ENCODE measurements at regions of chr4 and their contacts with region 1.

Region 1: GRCh38 chr4:169612871-169613859 is 782 bp upstream of the NEK1 start:
- DNase-seq: peak; percentile 85
- H3K4me3 ChIP-seq: peak overlapping the region; percentile 54 to 96 (median 94)
- H3K27ac ChIP-seq: peak overlapping the region; percentile 32
- H3K4me1 ChIP-seq: peaks cover 18% of the 10 kb centered on the region
- H3K27me3 ChIP-seq: no peaks in the 10 kb centered on the region
- CTCF ChIP-seq: peak; percentile 72 to 73
- POLR2A ChIP-seq: no peak

Region 2: DNA sequence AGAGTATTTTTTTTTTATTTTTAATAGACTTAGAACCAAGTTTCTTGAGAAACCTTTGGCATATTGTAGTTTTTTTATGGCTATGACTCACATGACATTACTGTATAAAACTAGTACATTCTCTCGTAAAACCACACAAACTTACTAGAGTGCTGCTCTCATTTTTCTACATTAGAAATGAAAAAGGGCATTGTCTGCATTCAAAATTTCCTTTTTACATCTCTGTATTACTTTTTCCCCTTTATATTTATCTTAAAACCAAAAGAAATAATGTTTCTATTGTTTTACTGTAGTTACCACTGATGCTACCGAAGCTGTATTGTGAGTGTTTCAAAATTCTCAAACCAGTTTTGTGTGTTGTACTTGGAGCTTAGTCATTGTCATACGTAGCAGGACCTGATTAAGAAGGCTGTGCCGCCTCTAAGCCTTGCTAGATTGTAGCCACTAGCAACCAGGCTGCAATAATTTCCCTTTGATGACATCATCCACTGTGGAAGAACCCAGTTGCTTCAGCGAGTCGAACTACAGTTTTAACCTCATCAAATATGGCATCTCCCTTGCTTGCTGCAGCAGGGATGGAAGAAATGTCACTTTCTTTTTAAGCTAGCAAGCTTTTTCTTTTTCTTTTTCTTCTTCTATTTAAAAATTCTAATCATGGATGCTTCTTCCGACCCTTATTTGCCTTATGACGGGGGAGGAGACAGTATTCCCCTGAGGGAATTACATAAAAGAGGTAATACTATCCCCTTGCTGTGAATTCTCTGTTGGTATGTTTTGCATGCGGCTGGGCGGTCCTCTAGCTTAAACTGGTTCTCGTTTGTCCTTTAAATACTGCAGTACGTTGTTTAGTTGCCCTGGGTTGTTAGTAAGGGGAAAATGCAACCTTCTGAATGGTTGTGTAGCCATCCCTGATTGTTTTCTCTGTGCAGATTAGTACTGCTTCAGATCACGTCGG is 46.8 kb after region 1 on chr4:
- CTCF ChIA-PET with region 1: interaction called, 31 read pairs
- POLR2A ChIA-PET with region 1: no interaction called
- dilution Hi-C with region 1: no loop called
- intact Hi-C with region 1: no loop called
- DNase-seq: peak; percentile 97
- H3K4me3 ChIP-seq: peak overlapping the region; percentile 37 to 77 (median 45)
- H3K27ac ChIP-seq: peak overlapping the region; percentile 94
- H3K4me1 ChIP-seq: peaks cover 52% of the 10 kb centered on the region
- H3K27me3 ChIP-seq: no peaks in the 10 kb centered on the region
- CTCF ChIP-seq: no peak
- POLR2A ChIP-seq: peak; percentile 28

Region 3: GRCh38 chr4:169723207-169723965 is 110.2 kb after region 1 on chr4:
- CTCF ChIA-PET with region 1: interaction called, 45 read pairs
- POLR2A ChIA-PET with region 1: no interaction called
- dilution Hi-C with region 1: no loop called
- intact Hi-C with region 1: loop called (anchors 1 kb)
- DNase-seq: peak; percentile 31
- H3K4me3 ChIP-seq: no peak overlapping the region
- H3K27ac ChIP-seq: no peak overlapping the region
- H3K4me1 ChIP-seq: no peaks in the 10 kb centered on the region
- H3K27me3 ChIP-seq: no peaks in the 10 kb centered on the region
- CTCF ChIP-seq: peak in 1 of 2 donors; percentile 13
- POLR2A ChIP-seq: no peak

Region 4: GRCh38 chr4:169765835-169766234 is 152.7 kb after region 1 on chr4:
- CTCF ChIA-PET with region 1: interaction called, 12 read pairs
- POLR2A ChIA-PET with region 1: no interaction called
- dilution Hi-C with region 1: no loop called
- intact Hi-C with region 1: no loop called
- DNase-seq: no peak
- H3K4me3 ChIP-seq: no peak overlapping the region
- H3K27ac ChIP-seq: no peak overlapping the region
- H3K4me1 ChIP-seq: no peaks in the 10 kb centered on the region
- H3K27me3 ChIP-seq: peaks cover 8 to 18% of the 10 kb centered on the region in 2 experiments
- CTCF ChIP-seq: no peak
- POLR2A ChIP-seq: no peak

Region 5: DNA sequence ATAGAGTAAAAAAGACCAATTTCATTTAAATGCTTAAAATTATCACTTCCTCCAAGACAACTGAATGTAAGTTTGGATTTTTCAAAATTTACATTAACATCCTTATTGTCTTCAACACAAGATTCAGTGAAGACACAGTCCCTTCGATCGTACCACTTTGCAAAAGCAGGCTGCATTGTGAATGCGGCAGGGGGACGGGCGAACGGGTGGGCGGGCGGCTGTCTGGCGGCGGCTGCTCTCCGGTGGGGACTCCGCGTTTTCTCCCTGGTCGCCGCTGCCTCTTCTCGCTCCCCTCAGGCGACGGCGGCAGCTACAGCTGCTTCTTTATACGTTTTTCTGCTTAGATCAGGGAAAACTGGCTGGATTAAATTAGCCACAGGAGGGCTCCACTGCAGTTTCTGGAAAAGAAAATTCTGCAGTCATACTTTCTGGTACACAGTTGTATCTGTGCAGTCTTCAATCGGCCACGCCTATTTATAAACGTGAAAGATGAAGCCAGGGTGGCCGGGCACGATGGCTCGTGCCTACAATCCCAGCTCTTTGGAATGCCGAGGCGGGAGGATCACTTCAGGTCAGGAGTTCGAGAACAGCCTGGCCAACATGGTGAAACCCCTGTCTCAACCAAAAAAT is 178.5 kb after region 1 on chr4:
- CTCF ChIA-PET with region 1: interaction called, 21 read pairs
- POLR2A ChIA-PET with region 1: no interaction called
- dilution Hi-C with region 1: no loop called
- intact Hi-C with region 1: loop called (anchors 1 kb)
- DNase-seq: peak; percentile 64
- H3K4me3 ChIP-seq: no peak overlapping the region
- H3K27ac ChIP-seq: no peak overlapping the region
- H3K4me1 ChIP-seq: no peaks in the 10 kb centered on the region
- H3K27me3 ChIP-seq: peaks cover 4 to 6% of the 10 kb centered on the region in 2 experiments
- CTCF ChIP-seq: peak; percentile 40 to 41
- POLR2A ChIP-seq: no peak

Region 6: GRCh38 chr4:169854090-169854489 is 240.9 kb after region 1 on chr4:
- CTCF ChIA-PET with region 1: no interaction called
- POLR2A ChIA-PET with region 1: no interaction called
- dilution Hi-C with region 1: no loop called
- intact Hi-C with region 1: no loop called
- DNase-seq: no peak
- H3K4me3 ChIP-seq: no peak overlapping the region
- H3K27ac ChIP-seq: no peak overlapping the region
- H3K4me1 ChIP-seq: no peaks in the 10 kb centered on the region
- H3K27me3 ChIP-seq: no peaks in the 10 kb centered on the region
- CTCF ChIP-seq: no peak
- POLR2A ChIP-seq: no peak

Region 7: DNA sequence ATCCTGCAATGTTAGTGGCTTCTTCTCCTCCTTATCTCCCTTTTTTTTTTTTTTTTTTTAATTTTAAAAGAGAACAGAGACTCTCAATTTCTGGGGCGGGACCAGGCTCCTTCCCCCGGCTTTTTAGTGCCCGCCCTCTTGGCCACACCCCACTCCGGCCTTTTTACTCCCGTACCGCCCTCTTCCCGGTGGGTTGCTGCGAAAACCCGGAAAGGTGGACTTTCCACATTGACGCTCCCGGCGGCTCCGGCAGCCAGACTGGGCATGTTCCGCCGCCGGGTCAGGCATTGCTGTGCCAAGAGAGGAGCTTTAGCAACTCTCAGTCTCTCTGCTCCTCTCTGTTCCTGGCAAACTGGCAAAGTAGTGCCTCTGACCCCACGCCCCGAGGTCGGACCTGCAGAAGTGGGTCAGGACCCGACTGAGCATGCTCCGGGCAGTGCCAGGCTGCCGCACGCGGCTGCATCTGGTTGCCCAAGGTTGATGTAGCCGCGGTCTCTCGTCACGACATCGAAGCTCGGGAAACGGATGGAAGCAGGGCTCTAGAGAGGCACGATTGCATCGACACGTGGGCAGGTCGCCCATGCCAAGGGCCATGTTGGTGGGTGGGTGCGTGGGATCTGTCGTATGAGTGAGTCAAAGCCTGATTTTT is 414.1 kb after region 1 on chr4:
- CTCF ChIA-PET with region 1: interaction called, 5 read pairs
- POLR2A ChIA-PET with region 1: no interaction called
- dilution Hi-C with region 1: no loop called
- intact Hi-C with region 1: loop called (anchors 1 kb)
- DNase-seq: peak; percentile 86
- H3K4me3 ChIP-seq: peak overlapping the region; percentile 37 to 93 (median 92)
- H3K27ac ChIP-seq: no peak overlapping the region
- H3K4me1 ChIP-seq: peaks cover 11% of the 10 kb centered on the region
- H3K27me3 ChIP-seq: peaks cover 26 to 55% of the 10 kb centered on the region in 2 experiments
- CTCF ChIP-seq: no peak
- POLR2A ChIP-seq: no peak

Region 8: DNA sequence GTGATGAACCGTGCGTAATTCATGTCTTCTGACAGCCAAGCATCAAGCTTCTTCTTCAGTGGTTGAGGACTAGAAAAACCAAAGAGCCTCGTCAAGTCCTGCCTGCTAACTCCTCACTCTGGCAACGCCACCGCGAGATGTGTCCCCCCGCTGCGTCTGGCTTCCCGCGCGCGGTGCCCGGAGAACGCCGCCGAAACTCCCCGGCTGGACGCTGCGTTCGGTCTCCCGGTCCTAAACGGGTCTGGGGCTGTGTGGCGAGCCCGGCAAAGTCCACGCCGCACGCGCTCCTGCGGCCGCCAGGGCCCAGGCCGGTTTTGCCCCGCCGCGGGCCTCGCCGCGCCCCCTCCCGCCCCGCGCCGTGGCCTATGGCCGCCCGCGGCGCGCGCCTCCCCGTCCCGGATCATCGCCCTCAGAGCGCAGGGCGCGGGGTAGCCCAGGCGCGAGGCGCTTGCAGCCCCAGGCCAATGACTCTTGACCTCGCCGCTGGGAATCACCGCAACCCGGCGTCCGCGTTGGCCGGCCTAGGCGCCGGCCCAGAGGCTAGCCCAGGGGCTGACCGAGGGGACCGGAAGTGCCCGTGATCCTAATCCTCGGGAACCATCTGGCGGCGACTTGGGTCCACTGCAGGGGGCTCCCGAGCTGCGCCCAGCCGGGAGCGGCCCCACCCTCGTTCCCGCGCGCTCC is 476.6 kb after region 1 on chr4 and contains the start of gene AADAT:
- CTCF ChIA-PET with region 1: interaction called, 3 read pairs
- POLR2A ChIA-PET with region 1: no interaction called
- dilution Hi-C with region 1: no loop called
- intact Hi-C with region 1: loop called (anchors 1 kb)
- DNase-seq: peak; percentile 44
- H3K4me3 ChIP-seq: peak within 1 kb of the TSS; percentile 3 to 68 (median 44)
- H3K27ac ChIP-seq: no peak within 1 kb of the TSS
- H3K4me1 ChIP-seq: peaks cover 3% of the 10 kb centered on the region
- H3K27me3 ChIP-seq: no peaks in the 10 kb centered on the region
- CTCF ChIP-seq: peak; percentile 68 to 78
- POLR2A ChIP-seq: no peak
- total RNA-seq, gene AADAT: 2.5 and 3.1 TPM in 2 replicates